ENCODE measurements at regions of chr10 and their contacts with region 1.

Region 1: GRCh38 chr10:73848821-73849489 is 25.4 kb downstream of the CAMK2G start:
- DNase-seq: peak; percentile 77 to 89
- H3K4me3 ChIP-seq: no peak overlapping the region
- H3K4me3 Mint-ChIP-seq: no peak overlapping the region
- H3K27ac Mint-ChIP-seq: no peak overlapping the region
- H3K4me1 ChIP-seq: peaks cover 5% of the 10 kb centered on the region; the same call in 1 of the 2 replicates
- H3K4me1 Mint-ChIP-seq: peaks cover 19% of the 10 kb centered on the region
- H3K27me3 ChIP-seq: no peaks in the 10 kb centered on the region
- H3K27me3 Mint-ChIP-seq: no peaks in the 10 kb centered on the region
- CTCF ChIP-seq: peak; percentile 98 to 99

Region 2: DNA sequence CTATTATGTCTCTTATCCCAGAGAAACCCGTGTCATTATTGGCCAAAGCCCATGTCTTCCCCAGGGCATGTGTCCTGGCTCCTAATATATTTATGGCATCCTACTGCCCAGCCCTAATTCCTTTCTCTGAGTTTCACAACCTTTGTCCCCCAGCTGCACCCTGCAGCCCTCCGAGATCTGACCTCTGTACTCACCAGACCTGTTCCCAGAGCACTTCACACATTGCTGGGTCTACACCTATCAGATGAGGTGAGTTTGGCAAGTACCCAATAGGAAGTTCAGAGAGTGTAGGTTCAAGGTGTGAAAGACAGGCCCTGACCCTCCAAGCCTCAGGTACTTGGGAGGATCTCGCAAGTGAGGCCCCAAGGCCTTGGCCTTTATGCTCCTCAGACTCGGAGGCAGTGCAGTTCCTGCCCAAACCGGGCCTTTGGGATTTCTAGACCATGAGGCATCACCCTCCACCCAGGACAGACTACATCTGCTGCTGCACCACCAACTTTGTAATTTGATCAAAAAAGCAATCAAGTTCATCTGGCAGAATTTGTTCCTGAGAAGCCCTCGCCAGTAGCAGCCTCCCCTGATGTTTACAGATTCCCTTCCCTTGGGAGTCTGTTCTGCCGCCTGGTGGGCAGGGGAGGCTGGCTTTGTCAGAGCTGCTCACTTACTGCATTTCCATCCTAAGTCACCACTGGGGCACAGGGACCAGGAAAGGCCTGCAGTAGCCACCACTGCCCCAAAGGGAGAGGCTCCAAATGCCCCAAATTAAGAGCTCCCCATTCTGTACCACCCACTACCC is 23.2 kb after region 1 on chr10:
- CTCF ChIA-PET with region 1: interaction called, 60 read pairs
- POLR2A ChIA-PET with region 1: interaction called, 3 read pairs
- intact Hi-C with region 1: loop called (anchors 1 kb)
- DNase-seq: peak; percentile 94 to 96
- H3K4me3 ChIP-seq: peak overlapping the region; percentile 83
- H3K4me3 Mint-ChIP-seq: peak overlapping the region; percentile 69
- H3K27ac Mint-ChIP-seq: peak overlapping the region; percentile 80
- H3K4me1 ChIP-seq: peaks cover 51% of the 10 kb centered on the region
- H3K4me1 Mint-ChIP-seq: peaks cover 27% of the 10 kb centered on the region
- H3K27me3 ChIP-seq: no peaks in the 10 kb centered on the region
- H3K27me3 Mint-ChIP-seq: no peaks in the 10 kb centered on the region
- CTCF ChIP-seq: peak in 1 of 2 experiments; percentile 42

Region 3: DNA sequence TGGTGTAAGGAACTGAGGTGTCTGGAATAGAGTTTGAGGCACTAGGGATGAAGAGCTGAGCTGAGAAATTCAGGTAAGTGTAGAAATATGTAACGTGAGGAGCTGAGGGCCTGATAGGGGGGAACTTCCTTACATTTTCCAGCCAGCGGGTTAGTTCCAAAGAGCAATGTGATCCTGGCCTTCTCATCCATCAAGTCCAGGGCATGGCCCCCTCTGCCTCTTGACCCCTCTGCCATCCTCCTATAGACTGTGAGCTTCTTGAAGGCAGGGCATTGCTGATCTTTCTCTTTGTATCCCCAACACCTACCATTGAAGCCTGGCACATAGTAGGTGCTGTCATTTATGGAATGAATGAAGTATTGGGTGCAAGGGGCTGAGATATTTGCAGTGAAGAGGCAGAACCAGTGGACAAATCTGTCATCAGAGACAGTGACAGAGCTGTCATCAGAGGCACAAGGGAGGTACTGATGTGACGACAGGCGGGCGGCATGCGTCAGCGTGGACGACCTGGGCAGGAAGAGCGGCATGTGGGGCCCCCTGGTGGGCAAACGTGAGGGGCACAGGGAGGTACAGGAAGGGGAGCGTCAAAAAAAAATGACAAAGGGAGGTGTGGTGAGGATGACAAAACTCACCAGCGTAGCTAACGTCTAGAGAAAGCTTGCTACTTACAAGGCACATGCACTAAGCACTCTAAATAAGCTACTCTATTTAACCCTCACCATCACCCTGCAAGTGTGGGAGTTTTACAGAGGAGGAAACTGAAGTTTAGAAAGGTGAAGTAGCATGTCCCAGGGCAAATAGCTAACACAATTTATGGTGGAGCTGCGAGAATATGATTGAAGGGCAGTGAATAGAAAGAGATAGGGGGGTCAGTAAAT is 30.6 kb after region 1 on chr10:
- CTCF ChIA-PET with region 1: interaction called, 60 read pairs
- POLR2A ChIA-PET with region 1: interaction called, 3 read pairs
- intact Hi-C with region 1: loop called (anchors 1 kb)
- DNase-seq: peak; percentile 83 to 91
- H3K4me3 ChIP-seq: no peak overlapping the region
- H3K4me3 Mint-ChIP-seq: no peak overlapping the region
- H3K27ac Mint-ChIP-seq: no peak overlapping the region
- H3K4me1 ChIP-seq: peaks cover 25% of the 10 kb centered on the region
- H3K4me1 Mint-ChIP-seq: peaks cover 17% of the 10 kb centered on the region
- H3K27me3 ChIP-seq: no peaks in the 10 kb centered on the region
- H3K27me3 Mint-ChIP-seq: no peaks in the 10 kb centered on the region
- CTCF ChIP-seq: peak; percentile 91 to 95

Measured in Caco-2 (cell line).